Activated CD4-positive, alpha-beta T cell treated with anti-CD3 and anti-CD28 coated beads for 36 hours (primary cell): ENCODE measurements at regions of chr5 and their contacts with region 1.

Region 1: GRCh38 chr5:6712577-6713275 is 506 bp upstream of the TENT4A start:
- DNase-seq: peak; percentile 98
- ATAC-seq: peak; percentile 84
- H3K4me3 Mint-ChIP-seq: peak overlapping the region; percentile 78
- H3K27ac Mint-ChIP-seq: peak overlapping the region; percentile 95
- H3K4me1 Mint-ChIP-seq: peaks cover 30% of the 10 kb centered on the region
- H3K27me3 Mint-ChIP-seq: no peaks in the 10 kb centered on the region

Region 2: GRCh38 chr5:5523066-5523505 is 1189.6 kb before region 1 on chr5:
- CTCF ChIA-PET with region 1: no interaction called
- POLR2A ChIA-PET with region 1: no interaction called
- intact Hi-C with region 1: loop called in 1 of 2 experiments (anchors 2 kb)
- DNase-seq: peak; percentile 19
- ATAC-seq: peak; percentile 82
- H3K4me3 Mint-ChIP-seq: no peak overlapping the region
- H3K27ac Mint-ChIP-seq: peak overlapping the region; percentile 80
- H3K4me1 Mint-ChIP-seq: peaks cover 31% of the 10 kb centered on the region
- H3K27me3 Mint-ChIP-seq: no peaks in the 10 kb centered on the region

Region 3: DNA sequence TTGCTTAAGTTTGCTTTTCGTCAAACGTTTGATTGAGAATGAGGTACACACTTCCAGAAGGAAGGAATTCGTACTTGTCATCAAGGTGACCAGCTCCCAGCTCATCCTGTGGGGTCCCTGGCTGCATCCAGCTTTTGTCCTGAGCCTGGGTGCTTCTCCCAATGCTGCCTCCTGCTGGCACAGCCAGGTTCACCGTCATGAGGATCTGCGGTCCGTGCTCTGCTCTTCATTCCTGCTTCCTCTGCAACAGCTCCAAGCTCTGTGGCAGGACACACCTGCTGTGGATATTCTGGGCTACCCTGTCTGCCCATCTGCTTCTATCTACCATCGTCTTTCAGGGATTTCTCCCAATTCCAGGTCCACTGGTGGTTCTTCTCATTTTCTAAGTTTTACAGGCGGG is 277.4 kb before region 1 on chr5:
- CTCF ChIA-PET with region 1: no interaction called
- POLR2A ChIA-PET with region 1: no interaction called
- intact Hi-C with region 1: no loop called
- DNase-seq: peak; percentile 51
- ATAC-seq: no peak
- H3K4me3 Mint-ChIP-seq: no peak overlapping the region
- H3K27ac Mint-ChIP-seq: no peak overlapping the region
- H3K4me1 Mint-ChIP-seq: no peaks in the 10 kb centered on the region
- H3K27me3 Mint-ChIP-seq: peaks cover 37% of the 10 kb centered on the region

Region 4: GRCh38 chr5:6504677-6505411 is 207.9 kb before region 1 on chr5:
- CTCF ChIA-PET with region 1: no interaction called
- POLR2A ChIA-PET with region 1: no interaction called
- intact Hi-C with region 1: no loop called
- DNase-seq: no peak
- ATAC-seq: no peak
- H3K4me3 Mint-ChIP-seq: no peak overlapping the region
- H3K27ac Mint-ChIP-seq: no peak overlapping the region
- H3K4me1 Mint-ChIP-seq: no peaks in the 10 kb centered on the region
- H3K27me3 Mint-ChIP-seq: peaks cover 15% of the 10 kb centered on the region

Region 5: DNA sequence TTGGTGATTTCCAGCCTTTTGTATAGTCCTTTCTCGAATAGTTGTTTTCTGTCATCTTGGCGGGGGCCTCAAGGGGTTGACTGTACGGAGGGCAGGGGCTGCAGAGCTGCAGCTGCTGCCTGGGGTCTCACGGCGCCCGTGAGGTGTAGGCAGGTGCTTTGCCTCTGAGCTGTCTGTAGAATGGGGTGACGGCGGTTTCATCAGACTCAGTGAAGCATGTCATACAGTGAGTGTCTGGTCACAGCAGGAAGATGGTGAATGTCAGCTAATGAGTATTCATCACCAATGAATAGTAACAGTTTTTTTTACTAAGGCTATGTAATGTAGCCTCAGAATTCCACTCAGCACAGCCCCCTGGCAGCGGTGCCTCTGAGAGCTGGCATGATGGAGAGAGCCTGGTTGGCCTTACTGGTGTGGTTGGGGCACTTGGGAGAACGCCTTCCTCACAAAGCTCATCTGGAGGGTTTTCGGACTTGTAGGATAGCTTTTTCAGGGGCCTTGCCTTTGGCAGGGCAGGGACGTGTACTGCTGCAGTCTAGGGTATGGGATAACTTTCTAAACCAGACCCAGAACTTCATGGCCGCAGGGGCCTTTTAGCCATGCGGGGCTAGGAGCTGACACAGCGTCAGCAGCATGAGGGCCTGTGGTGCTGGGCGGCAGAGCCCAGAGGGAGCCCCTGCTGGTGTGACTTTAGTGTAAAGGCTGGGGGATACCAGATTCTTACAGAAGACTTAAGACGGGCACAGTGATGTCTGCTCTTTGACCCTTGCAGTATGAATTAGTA is 15.5 kb after region 1 on chr5:
- CTCF ChIA-PET with region 1: interaction called, 6 read pairs
- POLR2A ChIA-PET with region 1: interaction called, 4 read pairs
- intact Hi-C with region 1: loop called in 1 of 2 experiments (anchors 2 kb)
- DNase-seq: peak; percentile 42
- ATAC-seq: peak; percentile 52
- H3K4me3 Mint-ChIP-seq: no peak overlapping the region
- H3K27ac Mint-ChIP-seq: peak overlapping the region; percentile 85
- H3K4me1 Mint-ChIP-seq: peaks cover 91% of the 10 kb centered on the region
- H3K27me3 Mint-ChIP-seq: no peaks in the 10 kb centered on the region

Region 6: DNA sequence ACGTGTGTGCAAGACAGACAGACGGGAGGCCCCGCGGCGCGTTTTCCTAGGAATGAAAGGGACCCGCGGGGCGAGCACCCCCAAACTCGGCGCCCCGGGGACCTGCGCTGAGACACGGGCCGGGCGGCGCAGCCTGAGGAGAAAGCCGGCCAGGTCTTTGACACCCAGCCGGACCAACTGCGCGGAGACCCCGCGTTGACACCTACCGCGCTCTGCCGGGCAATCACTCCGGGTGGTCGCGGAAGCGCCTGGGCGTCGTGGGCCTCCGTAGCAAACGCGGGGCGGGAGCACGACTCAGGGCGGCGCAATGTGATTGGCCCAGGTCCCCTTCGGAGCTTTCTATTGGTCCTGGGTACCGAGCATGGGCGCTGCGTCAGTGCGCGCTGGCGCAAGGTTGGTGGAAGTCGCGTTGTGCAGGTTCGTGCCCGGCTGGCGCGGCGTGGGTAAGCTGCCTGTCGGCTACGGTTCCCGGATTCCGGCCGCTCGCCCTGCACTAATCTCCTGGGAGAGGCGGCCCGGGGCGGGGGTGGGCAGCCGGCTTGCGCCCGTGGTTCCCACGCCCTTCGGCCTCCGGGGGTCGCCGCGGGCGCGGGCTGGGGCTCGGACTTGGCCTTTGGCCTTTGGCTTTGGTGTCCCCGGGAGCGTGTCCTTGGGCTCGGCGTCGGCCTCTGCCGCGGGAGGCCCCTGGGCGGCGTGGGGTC is 1156.2 kb after region 1 on chr5 and contains the starts of genes FASTKD3 and MTRR:
- CTCF ChIA-PET with region 1: no interaction called
- POLR2A ChIA-PET with region 1: no interaction called
- intact Hi-C with region 1: loop called (anchors 5 to 10 kb)
- DNase-seq: peak; percentile 93
- ATAC-seq: peak; percentile 99
- H3K4me3 Mint-ChIP-seq: peak within 1 kb of the TSS; percentile 94
- H3K27ac Mint-ChIP-seq: peak within 1 kb of the TSS; percentile 95
- H3K4me1 Mint-ChIP-seq: peaks cover 68% of the 10 kb centered on the region
- H3K27me3 Mint-ChIP-seq: no peaks in the 10 kb centered on the region
- total RNA-seq, gene FASTKD3: 9.2 to 9.6 TPM
- total RNA-seq, gene MTRR: 49.3 to 52.9 TPM